ENCODE measurements at regions of chr6 and their contacts with region 1.

Region 1: DNA sequence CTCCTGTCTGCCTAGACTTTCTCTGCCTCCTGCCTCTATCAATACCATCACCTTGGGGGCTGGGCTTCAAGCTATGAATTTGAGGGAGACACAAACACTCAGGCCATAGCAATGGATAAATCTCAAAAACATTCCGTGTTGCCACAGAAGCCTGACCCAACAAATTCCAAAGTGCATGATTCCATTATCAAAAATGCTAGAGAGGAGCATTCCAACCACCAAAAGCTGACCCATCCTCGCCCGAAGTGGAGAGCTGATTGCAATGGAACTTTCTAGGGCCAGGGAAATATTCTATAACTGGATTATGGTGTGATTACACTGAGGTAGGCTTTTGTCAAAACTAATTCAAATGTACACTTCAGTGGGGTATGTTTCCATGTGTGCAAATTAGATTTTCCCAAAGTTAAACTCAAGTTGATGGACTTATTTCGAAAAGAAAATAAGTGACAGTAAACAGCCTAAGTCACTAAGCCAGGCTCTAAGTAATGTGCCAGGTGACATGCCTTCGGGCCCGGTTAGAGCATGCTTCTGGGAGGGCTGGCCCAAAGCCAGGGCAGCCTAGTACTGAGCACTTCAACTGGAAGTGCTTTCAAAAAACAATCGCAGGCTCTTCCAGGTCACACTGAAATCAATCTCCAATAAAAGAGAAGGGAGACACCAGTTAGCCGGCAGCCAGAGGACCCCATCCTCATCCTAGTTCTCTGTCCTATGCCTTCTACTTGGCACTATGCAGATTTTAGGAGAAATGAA is 142.3 kb downstream of the TBXT start:
- DNase-seq: no peak
- H3K4me3 Mint-ChIP-seq: no peak overlapping the region
- H3K27ac Mint-ChIP-seq: no peak overlapping the region
- H3K4me1 Mint-ChIP-seq: no peaks in the 10 kb centered on the region
- H3K27me3 Mint-ChIP-seq: no peaks in the 10 kb centered on the region

Region 2: GRCh38 chr6:166258854-166259276 is 233.5 kb after region 1 on chr6:
- intact Hi-C with region 1: loop called (anchors 10 kb)
- DNase-seq: peak; percentile 40
- H3K4me3 Mint-ChIP-seq: no peak overlapping the region
- H3K27ac Mint-ChIP-seq: no peak overlapping the region
- H3K4me1 Mint-ChIP-seq: peaks cover 36% of the 10 kb centered on the region
- H3K27me3 Mint-ChIP-seq: peaks cover 19% of the 10 kb centered on the region

Region 3: DNA sequence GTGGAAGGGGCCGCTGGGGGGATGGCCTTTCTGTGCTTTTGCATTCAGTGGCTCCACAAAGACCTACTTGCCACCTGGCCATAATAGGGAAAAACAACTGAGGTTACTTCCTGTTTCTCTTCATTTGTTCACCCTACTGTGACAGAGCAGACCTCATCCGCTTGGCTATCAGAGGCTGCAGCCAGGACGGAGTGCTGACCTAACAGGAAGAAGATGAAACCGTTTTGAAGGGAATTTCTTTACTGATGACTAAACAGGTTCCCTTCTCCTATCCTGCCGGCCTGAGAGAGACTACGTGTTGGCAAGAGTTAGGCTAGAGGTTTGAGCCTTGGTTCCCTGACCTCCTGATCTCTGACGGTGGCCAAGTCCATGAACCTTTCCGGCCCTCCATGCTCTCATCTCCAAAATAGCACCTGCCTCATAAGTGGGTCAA is 261.5 kb after region 1 on chr6:
- intact Hi-C with region 1: loop called (anchors 10 kb)
- DNase-seq: no peak
- H3K4me3 Mint-ChIP-seq: no peak overlapping the region
- H3K27ac Mint-ChIP-seq: no peak overlapping the region
- H3K4me1 Mint-ChIP-seq: no peaks in the 10 kb centered on the region
- H3K27me3 Mint-ChIP-seq: peaks cover 18% of the 10 kb centered on the region